Gastrocnemius medialis (tissue), 4 donors: ENCODE measurements at regions of chr11 and their contacts with region 1.

Region 1: GRCh38 chr11:57567515-57568329 is at the start of gene UBE2L6:
- DNase-seq: peak in 1 of 2 donors; percentile 14
- ATAC-seq: peak; percentile 69 to 71
- H3K4me3 ChIP-seq: peak within 1 kb of the TSS; percentile 81 to 99 (median 88)
- H3K27ac ChIP-seq: peak within 1 kb of the TSS; percentile 74 to 79 (median 78)
- H3K4me1 ChIP-seq: peaks cover 13 to 32% of the 10 kb centered on the region in 2 donors
- H3K27me3 ChIP-seq: no peaks in the 10 kb centered on the region
- CTCF ChIP-seq: peak in 2 of 5 experiments; percentile 72 to 78
- POLR2A ChIP-seq: no peak
- total RNA-seq, gene UBE2L6: 5.5 to 9.0 (median 6.7) TPM

Region 2: DNA sequence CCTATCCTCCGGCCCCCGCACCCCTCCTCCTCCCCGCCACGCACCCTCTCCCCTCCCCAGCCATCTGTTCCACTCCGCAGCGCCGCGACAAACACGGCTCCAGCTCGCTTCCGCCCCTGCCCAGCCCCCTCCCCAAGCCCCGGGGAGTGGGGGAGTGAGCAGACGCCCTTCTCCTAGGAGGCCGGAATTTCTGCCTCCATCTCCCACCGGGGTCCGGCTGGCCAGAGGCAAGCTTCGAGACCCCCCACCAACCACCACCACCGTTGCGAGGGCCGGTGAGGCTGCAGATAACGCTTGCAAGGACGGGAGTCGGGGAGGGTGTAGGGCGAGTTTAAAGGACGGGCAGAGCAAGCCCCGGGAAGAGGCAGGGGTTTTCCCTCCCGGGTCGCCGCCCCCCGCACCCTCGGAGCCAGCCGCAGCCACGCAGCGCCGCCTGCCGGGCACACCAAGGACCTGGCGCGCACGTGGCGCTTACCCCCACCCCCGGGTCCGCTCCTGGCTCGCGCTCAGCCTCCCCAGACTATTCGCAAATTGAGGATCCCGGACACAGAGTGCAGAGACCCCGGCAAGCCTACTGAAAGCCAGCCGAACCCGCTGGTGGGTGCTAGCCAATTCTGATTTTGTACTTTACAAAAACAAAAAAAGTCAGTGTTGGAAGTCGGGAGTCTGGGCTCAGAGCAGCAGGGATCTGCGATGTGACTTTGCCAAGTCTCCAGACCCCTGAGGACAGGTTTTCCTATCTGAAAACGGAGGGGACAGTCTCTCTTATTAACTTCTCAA is 84.8 kb before region 1 on chr11:
- in situ Hi-C with region 1: no loop called
- intact Hi-C with region 1: no loop called
- DNase-seq: no peak
- ATAC-seq: no peak
- H3K4me3 ChIP-seq: peak overlapping the region; percentile 25 to 55 (median 46)
- H3K27ac ChIP-seq: no peak overlapping the region
- H3K4me1 ChIP-seq: peaks cover 18 to 23% of the 10 kb centered on the region in 2 donors
- H3K27me3 ChIP-seq: peaks cover 6 to 9% (median 6%) of the 10 kb centered on the region in 3 donors
- CTCF ChIP-seq: peak; percentile 57 to 79 (median 72)
- POLR2A ChIP-seq: no peak

Region 3: GRCh38 chr11:57597916-57598830 is 30.5 kb after region 1 on chr11:
- in situ Hi-C with region 1: no loop called
- intact Hi-C with region 1: loop called (anchors 2 kb)
- DNase-seq: peak; percentile 50 to 67
- ATAC-seq: peak; percentile 82 to 85
- H3K4me3 ChIP-seq: peak overlapping the region; percentile 51 to 64 (median 60)
- H3K27ac ChIP-seq: peak overlapping the region; percentile 76 to 90 (median 84)
- H3K4me1 ChIP-seq: peaks cover 0 to 7% of the 10 kb centered on the region in 2 donors
- H3K27me3 ChIP-seq: peaks cover 4 to 16% (median 6%) of the 10 kb centered on the region in 3 donors
- CTCF ChIP-seq: no peak
- POLR2A ChIP-seq: no peak

Region 4: DNA sequence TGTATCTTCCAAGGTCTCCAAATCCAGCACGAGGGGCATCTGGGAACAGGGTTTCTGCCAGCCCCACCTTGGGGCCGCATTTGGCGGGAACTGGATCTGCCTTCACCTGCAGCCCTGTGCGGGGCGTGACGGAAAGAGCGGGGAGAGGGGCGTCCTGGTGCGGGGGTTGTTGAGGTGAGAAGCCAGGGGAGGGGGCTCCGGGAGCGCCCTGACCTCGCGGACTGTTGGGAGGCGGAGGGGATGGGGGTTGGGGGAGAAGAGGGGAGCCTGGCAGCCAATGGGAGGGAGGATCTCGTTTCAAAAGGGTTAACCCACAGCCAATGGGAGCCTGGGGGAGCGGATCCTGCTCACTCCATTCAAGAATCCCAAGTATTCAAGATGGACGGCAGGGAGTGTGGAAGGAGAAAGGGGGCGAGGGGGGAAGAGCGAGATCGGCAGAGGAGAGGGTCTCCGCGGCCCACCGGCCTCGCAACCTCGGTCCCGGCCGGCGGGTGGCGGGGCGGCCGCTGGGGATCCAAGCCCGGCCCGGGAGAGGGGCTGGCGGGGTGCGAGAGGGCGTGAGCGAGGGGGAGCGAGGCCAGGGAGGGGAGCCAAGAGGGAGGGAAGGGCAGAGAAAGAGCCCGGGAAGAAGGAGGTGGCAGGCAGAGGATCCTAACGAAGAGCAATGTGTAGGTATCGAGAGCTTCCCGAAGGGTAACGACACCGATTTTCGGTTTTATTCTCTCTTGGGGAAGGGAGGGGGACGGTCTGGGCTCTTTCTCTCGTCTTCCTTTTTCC is 70.5 kb after region 1 on chr11:
- in situ Hi-C with region 1: loop called in 3 of 4 experiments (anchors 5 kb)
- intact Hi-C with region 1: loop called (anchors 1 kb)
- DNase-seq: no peak
- ATAC-seq: peak; percentile 47 to 57
- H3K4me3 ChIP-seq: peak overlapping the region; percentile 55 to 76 (median 63)
- H3K27ac ChIP-seq: peak overlapping the region; percentile 21 to 65 (median 42)
- H3K4me1 ChIP-seq: peaks cover 0 to 20% of the 10 kb centered on the region in 2 donors
- H3K27me3 ChIP-seq: peaks cover 14 to 19% (median 18%) of the 10 kb centered on the region in 3 donors
- CTCF ChIP-seq: no peak
- POLR2A ChIP-seq: no peak

Region 5: DNA sequence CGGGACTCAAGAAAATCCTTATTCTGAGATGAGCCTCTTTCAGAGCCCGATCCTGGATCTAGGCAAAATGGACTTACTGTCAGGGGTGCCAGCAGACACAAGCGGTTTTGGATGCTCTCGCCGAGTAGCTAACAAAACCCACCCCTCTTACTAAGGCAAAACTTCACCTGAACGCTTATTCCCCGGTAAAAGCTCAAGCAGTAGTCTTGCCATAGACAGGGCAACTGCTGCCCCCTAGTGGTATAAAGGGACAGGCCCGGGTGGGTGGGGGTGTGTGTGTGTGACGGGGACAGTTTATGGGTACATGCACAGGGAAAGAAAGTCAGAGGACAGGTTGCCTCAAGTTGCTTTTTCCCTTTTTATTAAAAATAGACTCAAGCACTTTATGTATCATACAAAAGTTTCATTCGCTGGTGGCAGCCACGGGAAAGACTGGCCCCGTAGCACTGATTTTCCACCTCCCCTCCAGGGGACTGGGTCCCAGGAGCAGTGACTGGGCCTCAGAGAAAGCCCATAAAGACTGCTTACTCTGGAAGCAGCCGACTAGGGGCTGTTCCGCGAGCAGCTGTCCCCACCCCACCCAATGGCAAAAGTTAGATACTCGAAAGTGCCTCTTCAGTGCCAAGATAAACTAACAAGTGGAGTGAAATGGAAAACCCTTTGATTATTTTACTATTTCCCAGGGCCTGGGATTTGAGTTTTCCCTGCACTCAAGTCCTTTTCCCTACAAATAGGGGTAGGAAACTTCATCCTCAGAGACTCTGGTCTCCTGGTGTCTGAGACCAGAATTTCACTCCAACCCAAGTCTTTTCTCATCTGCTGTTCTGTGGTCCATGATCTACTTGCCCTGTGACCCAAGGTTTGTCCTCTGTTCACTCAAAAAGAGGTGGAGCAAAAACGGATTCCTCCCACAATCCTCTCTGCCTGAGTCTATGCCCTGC is 77.3 kb after region 1 on chr11:
- in situ Hi-C with region 1: loop called in 3 of 4 experiments (anchors 5 kb)
- intact Hi-C with region 1: loop called (anchors 1 kb)
- DNase-seq: peak; percentile 66 to 73
- ATAC-seq: peak; percentile 69 to 76
- H3K4me3 ChIP-seq: no peak overlapping the region
- H3K27ac ChIP-seq: peak overlapping the region; percentile 29 to 56 (median 44)
- H3K4me1 ChIP-seq: peaks cover 17 to 22% of the 10 kb centered on the region in 2 donors
- H3K27me3 ChIP-seq: peaks cover 39 to 45% (median 43%) of the 10 kb centered on the region in 3 donors
- CTCF ChIP-seq: peak; percentile 71 to 96 (median 78)
- POLR2A ChIP-seq: no peak

Region 6: GRCh38 chr11:57792060-57792541 is 224.4 kb after region 1 on chr11:
- in situ Hi-C with region 1: no loop called
- intact Hi-C with region 1: loop called (anchors 10 kb)
- DNase-seq: peak in 1 of 2 donors; percentile 50
- ATAC-seq: no peak
- H3K4me3 ChIP-seq: no peak overlapping the region
- H3K27ac ChIP-seq: peak overlapping the region; percentile 40 to 48 (median 44)
- H3K4me1 ChIP-seq: peaks cover 42 to 46% of the 10 kb centered on the region in 2 donors
- H3K27me3 ChIP-seq: no peaks in the 10 kb centered on the region
- CTCF ChIP-seq: no peak
- POLR2A ChIP-seq: no peak